ENCODE measurements at regions of chr1 and their contacts with region 1.

Region 1: DNA sequence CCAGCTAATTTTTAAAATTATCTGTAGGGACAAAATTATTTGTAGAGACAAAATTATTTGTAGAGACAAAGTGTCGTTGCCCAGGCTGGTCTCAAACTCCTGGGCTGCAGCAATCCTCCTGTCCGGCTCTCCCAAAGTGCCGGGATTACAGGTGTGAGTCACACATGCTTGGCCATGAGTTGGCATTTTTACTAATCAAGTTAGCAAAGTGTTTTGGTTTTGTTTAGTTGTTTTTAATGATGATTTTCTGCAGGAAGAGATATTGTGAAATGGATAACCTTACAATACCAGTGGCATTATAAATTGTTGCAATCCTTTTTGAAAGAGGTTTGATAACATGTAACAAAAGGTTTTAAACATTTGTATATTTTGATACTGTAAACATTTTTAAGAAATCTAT is 65.3 kb upstream of the MAGI3 start:
- DNase-seq: peak; percentile 41
- H3K27ac ChIP-seq: peak overlapping the region; percentile 54
- CTCF ChIP-seq: no peak

Region 2: GRCh38 chr1:113140588-113141446 is 184.2 kb before region 1 on chr1:
- CTCF ChIA-PET with region 1: no interaction called
- POLR2A ChIA-PET with region 1: no interaction called
- DNase-seq: peak; percentile 75
- H3K27ac ChIP-seq: peak overlapping the region; percentile 18; the same call in 1 of the 2 replicates
- CTCF ChIP-seq: peak; percentile 78

Region 3: DNA sequence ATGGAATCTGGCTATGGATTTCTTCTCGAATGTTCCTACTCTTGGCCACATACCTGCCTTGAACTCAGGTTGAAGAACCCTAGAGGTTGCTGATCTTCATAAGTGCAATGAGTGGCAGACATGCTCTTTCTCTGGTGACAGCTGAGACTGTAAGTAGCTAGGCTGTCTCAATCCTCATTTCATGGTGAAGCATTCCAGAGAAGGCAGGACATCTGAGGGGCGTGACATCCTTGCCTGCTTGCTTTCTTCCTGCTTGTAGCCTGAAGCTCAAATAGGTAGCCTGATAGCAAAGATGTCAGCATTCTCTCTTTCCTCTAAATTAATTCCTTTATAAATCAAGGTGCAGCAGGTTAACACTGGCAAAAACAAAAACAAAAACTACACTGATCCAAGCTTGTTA is 49.3 kb before region 1 on chr1:
- CTCF ChIA-PET with region 1: no interaction called
- POLR2A ChIA-PET with region 1: no interaction called
- DNase-seq: no peak
- H3K27ac ChIP-seq: no peak overlapping the region
- CTCF ChIP-seq: no peak

Region 4: DNA sequence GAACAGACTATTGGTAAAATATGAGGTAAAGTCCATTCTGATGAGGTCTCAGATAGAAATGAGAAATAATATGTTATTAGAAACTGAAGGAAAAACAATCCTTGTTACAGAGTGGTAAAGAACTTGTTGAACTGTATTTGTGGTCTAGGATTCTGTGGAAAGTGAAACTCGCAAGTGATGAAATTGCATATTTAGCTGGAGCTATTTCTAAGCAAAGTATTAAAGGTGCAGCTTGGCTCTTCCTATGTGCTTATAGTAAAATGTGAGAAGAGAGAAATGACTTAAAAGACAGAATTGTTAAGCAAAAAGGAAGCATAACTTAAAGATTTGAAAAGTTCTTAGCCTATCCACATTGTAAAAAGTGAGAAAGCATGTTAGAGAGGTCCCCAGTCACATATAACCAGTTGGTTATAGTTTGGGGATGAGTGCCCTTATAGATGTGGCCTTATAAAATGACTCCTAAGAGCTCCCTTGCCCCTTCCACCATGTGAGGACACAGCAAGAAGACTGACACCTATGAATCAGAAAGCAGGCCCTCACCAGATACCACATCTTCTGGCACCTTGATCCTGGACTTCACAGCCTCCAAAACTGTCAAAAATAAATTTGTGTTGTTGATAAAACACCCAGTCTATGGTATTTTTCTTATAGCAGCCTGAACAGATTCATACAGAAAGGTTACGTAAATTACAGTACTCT is 409.5 kb after region 1 on chr1:
- CTCF ChIA-PET with region 1: interaction called, 10 read pairs
- POLR2A ChIA-PET with region 1: no interaction called
- DNase-seq: no peak
- H3K27ac ChIP-seq: no peak overlapping the region
- CTCF ChIP-seq: no peak